ENCODE measurements at regions of chr3 and their contacts with region 1.

Region 1: DNA sequence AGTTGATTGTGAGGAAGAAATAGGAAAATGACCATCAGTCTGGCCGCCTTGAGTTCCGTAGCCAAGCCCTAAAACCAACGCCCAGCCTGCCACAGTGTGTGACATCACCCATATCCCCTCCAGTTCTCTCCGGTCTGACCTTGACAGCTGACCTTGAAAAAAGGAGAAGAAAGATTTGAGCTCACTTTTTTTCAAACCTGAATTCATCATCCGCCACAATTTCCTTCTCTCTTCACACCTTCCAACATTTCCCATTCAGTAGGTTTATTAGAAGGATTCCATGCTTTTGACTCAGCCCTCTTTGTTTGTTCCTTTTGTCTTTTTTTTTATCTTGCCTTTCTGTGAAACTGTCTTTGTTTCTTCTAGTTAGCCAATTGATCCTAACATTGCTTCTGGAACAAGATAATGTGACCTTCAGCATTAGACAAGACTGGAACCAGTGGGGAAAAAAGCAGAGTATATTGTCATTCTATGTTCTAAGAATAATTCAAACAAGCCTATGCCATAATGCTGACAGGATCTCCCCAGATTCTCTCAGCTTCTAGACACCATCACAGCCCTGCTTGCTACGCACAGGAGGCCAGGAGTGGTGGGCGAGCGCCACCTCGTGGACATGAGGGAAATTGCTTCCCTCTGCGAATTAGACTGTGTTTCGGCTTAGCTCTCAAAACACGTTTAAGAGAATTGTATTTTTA is 283.1 kb downstream of the FGF12 start:
- DNase-seq: peak; percentile 39 to 53
- ATAC-seq: peak; percentile 71 to 89 (median 78)
- H3K4me3 ChIP-seq: no peak overlapping the region
- H3K27ac ChIP-seq: no peak overlapping the region
- H3K4me1 ChIP-seq: peaks cover 0 to 35% (median 14%) of the 10 kb centered on the region in 9 donors
- H3K27me3 ChIP-seq: peaks cover 0 to 6% (median 0%) of the 10 kb centered on the region in 7 donors
- CTCF ChIP-seq: peak; percentile 94 to 100 (median 97)

Region 2: GRCh38 chr3:191412759-191413158 is 1031.5 kb before region 1 on chr3:
- intact Hi-C with region 1: loop called in 8 of 10 experiments (anchors 1 to 10 kb)
- DNase-seq: no peak
- ATAC-seq: no peak
- H3K4me3 ChIP-seq: no peak overlapping the region
- H3K27ac ChIP-seq: no peak overlapping the region
- H3K4me1 ChIP-seq: peaks cover 0 to 8% (median 0%) of the 10 kb centered on the region in 9 donors
- H3K27me3 ChIP-seq: no peaks in the 10 kb centered on the region
- CTCF ChIP-seq: no peak

Region 3: GRCh38 chr3:192130534-192131132 is 313.6 kb before region 1 on chr3:
- intact Hi-C with region 1: loop called in 8 of 10 experiments (anchors 2 to 5 kb)
- DNase-seq: peak in 1 of 2 donors; percentile 34
- ATAC-seq: peak in 7 of 8 donors; percentile 58 to 86 (median 74)
- H3K4me3 ChIP-seq: no peak overlapping the region
- H3K27ac ChIP-seq: no peak overlapping the region
- H3K4me1 ChIP-seq: no peaks in the 10 kb centered on the region
- H3K27me3 ChIP-seq: no peaks in the 10 kb centered on the region
- CTCF ChIP-seq: peak; percentile 64 to 87 (median 77)

Region 4: DNA sequence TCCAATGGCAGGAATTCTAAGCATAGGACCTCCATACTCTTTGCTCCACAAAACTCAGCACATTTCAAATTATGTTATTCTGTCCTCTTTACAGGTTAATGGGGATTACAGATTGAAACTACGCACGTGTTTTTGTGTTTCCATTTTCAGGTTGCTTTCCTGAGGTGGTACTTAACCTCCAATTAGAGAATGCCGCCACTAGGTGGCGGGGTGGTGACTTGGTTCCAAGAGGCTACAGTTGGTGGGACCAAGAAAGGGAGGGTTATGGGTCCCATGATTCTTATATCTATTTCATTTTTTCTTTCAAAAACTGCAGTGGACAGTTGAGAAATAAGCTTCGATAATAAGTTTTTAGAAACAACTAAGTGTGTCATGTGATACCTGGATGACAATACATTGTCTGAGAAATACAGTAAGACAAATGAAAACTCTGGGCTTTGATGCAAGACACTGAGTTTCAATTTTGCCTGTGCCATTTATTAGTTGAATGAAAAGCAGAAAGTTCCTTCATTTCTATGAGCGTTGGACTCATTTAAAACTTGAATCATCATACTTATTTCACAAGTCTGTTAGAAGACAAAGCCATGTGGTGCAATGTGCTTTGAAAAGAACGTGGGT is 255.9 kb before region 1 on chr3:
- intact Hi-C with region 1: loop called in 7 of 10 experiments (anchors 1 to 10 kb)
- DNase-seq: peak; percentile 19 to 29
- ATAC-seq: peak in 2 of 8 donors; percentile 63 to 69
- H3K4me3 ChIP-seq: no peak overlapping the region
- H3K27ac ChIP-seq: no peak overlapping the region
- H3K4me1 ChIP-seq: peaks cover 0 to 23% (median 0%) of the 10 kb centered on the region in 9 donors
- H3K27me3 ChIP-seq: no peaks in the 10 kb centered on the region
- CTCF ChIP-seq: peak; percentile 32 to 71 (median 63)

Region 5: GRCh38 chr3:192194085-192194484 is 250.2 kb before region 1 on chr3:
- intact Hi-C with region 1: loop called in 6 of 10 experiments (anchors 2 to 10 kb)
- DNase-seq: no peak
- ATAC-seq: no peak
- H3K4me3 ChIP-seq: no peak overlapping the region
- H3K27ac ChIP-seq: no peak overlapping the region
- H3K4me1 ChIP-seq: peaks cover 0 to 7% (median 0%) of the 10 kb centered on the region in 9 donors
- H3K27me3 ChIP-seq: no peaks in the 10 kb centered on the region
- CTCF ChIP-seq: no peak

Measured in heart right ventricle (tissue), 16 donors.